OCI-LY7 (cell line): ENCODE measurements at regions of chr4 and their contacts with region 1.

Region 1: GRCh38 chr4:24210332-24210902 is 320.6 kb upstream of the PPARGC1A start:
- DNase-seq: no peak
- H3K4me3 ChIP-seq: no peak overlapping the region
- H3K27ac ChIP-seq: no peak overlapping the region
- H3K4me1 ChIP-seq: no peaks in the 10 kb centered on the region
- CTCF ChIP-seq: no peak

Region 2: DNA sequence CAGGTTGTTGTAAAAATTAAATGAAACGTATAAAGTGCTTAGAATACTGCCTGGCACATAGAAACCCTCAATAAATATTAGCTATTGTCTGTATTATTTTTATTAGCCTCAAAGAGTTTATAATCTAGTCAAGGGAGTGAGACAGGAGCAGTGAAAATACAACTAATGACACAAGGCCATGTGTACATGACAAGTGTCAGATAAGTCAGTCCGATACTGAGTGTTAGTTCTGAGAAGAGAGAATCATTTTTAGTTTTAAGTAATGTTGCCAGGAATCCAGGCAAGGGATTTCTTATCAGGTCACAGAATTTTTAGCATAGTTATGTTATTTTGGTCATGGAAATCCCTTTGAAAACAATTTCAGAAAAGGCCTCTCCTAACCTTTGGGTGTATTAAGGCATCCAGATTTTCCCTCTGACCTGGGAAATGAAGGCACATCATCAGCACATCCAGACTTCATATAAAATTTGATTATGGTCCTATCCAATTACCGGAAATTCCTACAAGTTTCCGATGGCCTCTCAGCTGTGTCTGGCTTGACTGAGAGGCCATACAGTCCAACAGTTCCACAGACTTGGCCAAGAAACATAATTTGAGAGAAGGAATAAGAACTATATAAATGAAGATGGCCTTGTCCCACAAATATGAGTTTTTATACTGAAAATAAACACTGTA is 356.3 kb before region 1 on chr4:
- CTCF ChIA-PET with region 1: no interaction called
- POLR2A ChIA-PET with region 1: interaction called, 10 read pairs
- intact Hi-C with region 1: no loop called
- DNase-seq: no peak
- H3K4me3 ChIP-seq: no peak overlapping the region
- H3K27ac ChIP-seq: no peak overlapping the region
- H3K4me1 ChIP-seq: no peaks in the 10 kb centered on the region
- CTCF ChIP-seq: no peak

Region 3: DNA sequence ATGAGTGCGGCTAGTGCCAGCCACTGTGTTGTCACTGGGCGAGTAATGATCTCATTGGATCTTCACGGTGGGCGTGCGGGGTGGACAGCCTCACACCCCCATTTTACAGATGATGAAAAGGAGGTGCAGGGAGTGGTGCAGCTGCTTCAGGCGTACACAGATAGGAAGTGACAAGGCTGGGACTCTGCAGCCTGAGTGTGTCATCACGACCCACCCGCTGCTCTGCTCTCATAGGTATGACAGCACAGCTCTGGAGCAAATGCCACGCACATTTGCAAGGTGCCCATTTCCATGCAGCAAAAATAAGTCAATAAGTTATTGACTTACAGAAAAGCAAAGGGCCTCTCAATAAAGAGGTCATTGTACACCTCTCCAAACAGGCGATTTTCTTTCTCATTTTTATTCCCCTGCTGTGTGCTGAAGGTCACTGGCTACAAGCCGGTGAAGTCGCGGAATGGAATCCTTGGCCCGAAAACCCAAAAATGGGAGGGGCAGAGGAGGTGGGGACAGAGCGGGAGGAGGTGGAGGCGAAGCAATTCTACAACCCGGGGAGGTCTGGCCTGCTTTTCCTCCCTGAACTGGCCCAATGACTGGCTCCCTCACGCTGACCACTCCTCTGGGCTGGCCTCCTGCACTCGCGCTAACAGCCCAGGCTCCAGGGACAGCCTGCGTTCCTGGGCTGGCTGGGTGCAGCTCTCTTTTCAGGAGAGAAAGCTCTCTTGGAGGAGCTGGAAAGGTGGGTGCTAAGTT is 584.7 kb after region 1 on chr4 and contains the start of gene SOD3:
- CTCF ChIA-PET with region 1: no interaction called
- POLR2A ChIA-PET with region 1: no interaction called
- intact Hi-C with region 1: no loop called
- DNase-seq: no peak
- H3K4me3 ChIP-seq: no peak within 1 kb of the TSS
- H3K27ac ChIP-seq: no peak within 1 kb of the TSS
- H3K4me1 ChIP-seq: no peaks in the 10 kb centered on the region
- CTCF ChIP-seq: no peak
- total RNA-seq, gene SOD3: not detected in 2 replicates